ENCODE measurements at regions of chr6 and their contacts with region 1.

Region 1: DNA sequence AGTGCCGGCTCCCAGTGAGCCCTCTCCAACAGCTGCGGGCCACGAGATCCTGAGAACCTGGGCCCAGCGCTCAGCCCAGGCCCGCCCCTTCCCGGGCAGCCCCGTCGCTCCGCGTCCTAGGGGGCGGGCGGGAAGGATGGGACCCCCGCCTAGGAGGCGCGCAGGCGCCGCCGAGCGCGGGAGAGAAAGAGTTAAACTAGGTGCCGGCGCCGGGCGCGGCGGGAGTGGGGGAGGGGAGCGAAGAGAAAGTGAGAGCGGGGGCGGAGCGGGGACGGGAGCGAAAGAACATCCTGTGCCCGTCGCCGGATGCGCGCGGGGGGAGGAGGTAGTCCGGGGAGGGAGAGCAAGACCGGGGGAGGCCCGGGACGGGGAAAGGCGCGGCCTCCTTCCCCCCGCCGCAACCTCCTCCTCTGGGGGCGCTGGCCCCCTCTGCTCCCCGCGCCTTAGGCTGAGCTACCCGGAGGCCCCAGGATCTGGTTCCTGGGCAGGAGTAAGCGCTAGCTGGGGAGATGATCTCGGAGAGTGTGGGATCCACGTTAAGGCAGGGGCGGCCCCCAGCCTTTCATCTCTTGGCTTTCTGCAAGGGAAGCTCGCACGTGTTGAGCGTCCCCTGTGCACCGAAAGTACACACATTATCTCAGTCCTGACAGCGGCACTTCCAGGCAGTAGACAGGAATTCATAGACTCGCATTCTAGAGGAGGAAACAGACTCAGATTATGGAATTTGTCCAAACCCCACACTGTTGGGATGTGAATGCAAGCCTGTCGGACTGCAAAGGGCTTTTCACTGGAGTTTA is 4.9 kb upstream of the ARMC12 start:
- DNase-seq: no peak
- H3K4me3 ChIP-seq: peak overlapping the region; percentile 77
- H3K27me3 ChIP-seq: no peaks in the 10 kb centered on the region
- CTCF ChIP-seq: no peak

Region 2: GRCh38 chr6:35522660-35523658 is 209.0 kb before region 1 on chr6:
- CTCF ChIA-PET with region 1: interaction called, 113 read pairs
- POLR2A ChIA-PET with region 1: interaction called, 3 read pairs
- DNase-seq: no peak
- H3K4me3 ChIP-seq: 0 out of 2 replicates have a peak overlapping the region, but pooled peaks have one; percentile 4
- H3K27me3 ChIP-seq: peaks cover 6% of the 10 kb centered on the region
- CTCF ChIP-seq: peak; percentile 99

Region 3: DNA sequence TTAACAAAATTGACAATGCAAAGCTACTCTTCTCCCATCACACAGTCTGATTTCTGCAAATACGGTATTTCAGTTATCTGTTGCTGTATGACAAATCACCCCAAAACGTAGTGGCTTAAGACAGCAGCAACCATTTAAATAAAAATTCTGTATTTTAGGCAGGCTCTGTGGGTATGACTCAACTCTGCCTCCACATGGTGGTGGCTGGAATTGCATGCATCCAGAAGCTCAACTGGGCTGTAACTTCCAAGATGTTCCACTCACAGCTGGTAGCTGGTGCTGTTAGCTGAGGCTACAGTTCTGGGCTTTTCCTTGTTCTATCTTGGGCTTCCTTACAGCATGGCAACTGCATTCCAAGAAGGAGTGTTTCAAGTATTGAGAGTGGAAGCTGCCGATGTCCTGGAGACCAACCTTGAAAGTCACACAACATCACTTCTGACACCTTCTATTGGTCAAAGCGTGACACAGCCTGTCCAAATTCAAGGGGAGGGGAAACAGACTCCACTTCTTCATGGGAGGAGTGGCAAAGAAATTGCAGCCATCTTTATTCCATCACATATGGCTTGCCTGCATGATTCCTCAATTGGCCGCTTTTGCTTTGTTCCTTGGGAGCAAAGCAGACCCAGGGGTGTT is 179.5 kb before region 1 on chr6:
- CTCF ChIA-PET with region 1: interaction called, 12 read pairs
- POLR2A ChIA-PET with region 1: no interaction called
- DNase-seq: no peak
- H3K4me3 ChIP-seq: no peak overlapping the region
- H3K27me3 ChIP-seq: peaks cover 2% of the 10 kb centered on the region
- CTCF ChIP-seq: peak; percentile 89

Region 4: DNA sequence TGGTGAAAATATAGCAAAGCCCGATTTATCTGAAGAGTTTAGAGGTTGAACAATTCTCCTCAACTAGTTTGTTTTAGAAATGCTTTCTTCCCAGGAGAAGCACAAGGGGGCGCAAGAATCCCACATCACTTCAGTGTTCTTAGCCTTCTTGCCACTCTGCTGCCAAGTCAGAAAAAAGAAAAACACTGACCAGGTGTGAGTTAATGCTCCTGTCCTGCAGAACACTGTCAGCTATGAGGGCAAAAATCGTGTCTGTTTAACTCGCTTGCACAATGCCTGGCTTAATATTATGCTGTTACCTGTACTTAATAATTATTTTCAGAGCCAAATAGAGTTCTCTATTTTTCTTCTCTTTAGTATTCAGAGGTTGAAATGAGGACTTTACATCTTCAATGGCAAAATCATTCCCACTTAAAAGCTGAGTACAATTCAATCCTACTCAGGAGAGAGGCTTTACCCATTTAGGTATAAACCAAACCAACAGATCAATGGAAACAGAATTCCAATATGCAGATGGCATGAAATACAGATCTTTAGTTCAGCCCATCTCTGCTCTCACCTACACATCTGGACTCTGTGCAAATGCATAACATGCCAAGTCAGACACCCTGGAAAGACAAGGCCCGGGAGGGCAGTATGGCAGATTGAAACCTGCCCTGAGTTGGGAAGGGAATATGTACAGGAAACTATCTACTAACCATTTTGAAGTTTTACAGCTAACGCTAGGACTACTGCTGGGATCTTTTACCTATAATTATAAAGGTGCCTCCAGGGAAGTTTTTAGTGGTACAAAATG is 147.8 kb before region 1 on chr6:
- CTCF ChIA-PET with region 1: interaction called, 162 read pairs
- POLR2A ChIA-PET with region 1: no interaction called
- DNase-seq: no peak
- H3K4me3 ChIP-seq: no peak overlapping the region
- H3K27me3 ChIP-seq: no peaks in the 10 kb centered on the region
- CTCF ChIP-seq: peak; percentile 81

Region 5: DNA sequence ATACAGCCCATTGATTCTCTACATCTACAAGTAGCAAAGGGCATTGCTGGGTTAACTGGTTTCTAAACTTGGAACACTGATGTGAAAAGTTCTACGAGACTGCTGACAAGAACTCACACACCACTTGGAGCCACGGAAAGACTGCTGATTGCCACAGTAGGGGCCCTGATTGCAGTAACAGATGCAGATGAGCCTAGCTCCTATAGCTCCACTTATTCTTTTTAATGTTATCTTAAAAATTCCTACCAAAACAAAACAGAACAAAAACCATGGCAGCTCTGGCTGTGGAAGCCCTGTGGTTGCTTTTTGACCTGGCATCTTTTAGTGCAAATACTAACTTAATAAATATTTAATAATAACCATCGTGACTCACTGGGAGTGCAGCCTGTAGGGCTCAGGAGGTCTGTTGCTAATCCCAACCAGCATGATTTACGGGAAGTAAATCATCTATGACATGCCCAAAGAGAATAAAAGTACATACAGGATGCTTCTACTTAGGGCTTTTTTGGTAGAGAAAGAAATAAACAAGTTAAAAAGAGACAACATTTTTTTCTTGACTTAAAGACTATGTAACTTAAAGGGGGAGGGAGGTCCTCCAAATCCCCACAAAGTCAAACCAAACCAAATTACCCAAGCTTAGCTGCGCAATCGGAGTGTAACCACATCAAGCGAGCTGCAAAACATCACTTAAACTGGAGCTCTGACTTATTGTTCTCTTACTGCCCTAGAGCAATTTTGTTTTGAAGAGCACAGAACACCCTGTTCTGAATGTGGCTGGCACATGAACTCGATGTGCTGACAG is 130.4 kb before region 1 on chr6:
- CTCF ChIA-PET with region 1: interaction called, 36 read pairs
- POLR2A ChIA-PET with region 1: no interaction called
- DNase-seq: peak; percentile 50
- H3K4me3 ChIP-seq: no peak overlapping the region
- H3K27me3 ChIP-seq: no peaks in the 10 kb centered on the region
- CTCF ChIP-seq: no peak

Region 6: DNA sequence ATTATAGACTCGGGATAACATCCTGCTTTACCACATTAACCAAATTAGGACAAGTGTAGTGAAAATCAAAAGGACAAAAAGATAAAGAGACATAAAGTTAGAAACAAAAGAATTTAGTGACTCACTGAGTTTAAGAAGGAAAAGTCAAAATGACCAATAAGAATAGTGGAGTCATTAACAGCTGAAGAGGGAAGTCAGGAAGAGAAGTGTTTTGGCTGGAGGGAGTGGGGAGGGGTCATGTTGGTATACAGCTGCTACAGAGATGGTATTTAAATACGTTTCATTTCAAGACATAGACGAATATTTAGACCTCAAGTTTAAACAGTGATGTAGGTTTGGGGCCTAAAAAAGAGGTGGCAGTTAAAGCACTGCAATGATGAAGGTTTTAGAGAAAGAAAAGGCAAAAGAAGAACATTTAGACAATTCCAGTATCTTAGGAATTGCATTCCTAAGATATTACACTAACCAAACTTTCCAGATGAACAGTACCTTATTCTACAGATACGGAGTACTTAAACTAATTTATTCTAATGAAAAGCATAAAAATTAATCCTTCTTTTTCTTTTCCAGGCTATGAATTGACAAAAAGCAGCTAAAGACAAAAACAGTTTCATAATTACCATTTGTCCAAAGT is 53.8 kb before region 1 on chr6:
- CTCF ChIA-PET with region 1: interaction called, 19 read pairs
- POLR2A ChIA-PET with region 1: no interaction called
- DNase-seq: no peak
- H3K4me3 ChIP-seq: no peak overlapping the region
- H3K27me3 ChIP-seq: no peaks in the 10 kb centered on the region
- CTCF ChIP-seq: no peak

Region 7: GRCh38 chr6:35751594-35751993 is 19.7 kb after region 1 on chr6:
- CTCF ChIA-PET with region 1: interaction called, 15 read pairs
- POLR2A ChIA-PET with region 1: no interaction called
- DNase-seq: no peak
- H3K4me3 ChIP-seq: no peak overlapping the region
- H3K27me3 ChIP-seq: no peaks in the 10 kb centered on the region; the same call in 1 of the 2 replicates
- CTCF ChIP-seq: no peak

Region 8: DNA sequence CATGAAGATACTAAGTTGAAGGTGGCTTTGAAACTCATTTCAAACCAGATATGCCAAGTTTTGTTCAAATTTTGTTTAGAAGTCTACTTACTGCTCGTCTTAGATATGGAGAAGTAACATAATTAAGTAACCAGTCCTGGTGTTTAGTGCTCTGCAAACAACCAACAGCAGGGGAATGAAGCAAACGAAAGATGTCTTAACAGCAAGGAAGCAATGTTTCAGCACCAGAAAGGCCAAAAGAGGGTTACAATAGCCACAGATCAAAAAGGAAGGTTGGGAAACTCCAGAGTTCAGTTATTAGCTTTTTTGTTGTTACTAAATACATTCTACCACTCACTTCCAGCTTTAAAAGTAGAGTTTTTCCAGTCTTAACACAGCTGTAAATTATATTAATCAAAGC is 118.3 kb after region 1 on chr6:
- CTCF ChIA-PET with region 1: no interaction called
- POLR2A ChIA-PET with region 1: no interaction called
- DNase-seq: no peak
- H3K4me3 ChIP-seq: no peak overlapping the region
- H3K27me3 ChIP-seq: no peaks in the 10 kb centered on the region
- CTCF ChIP-seq: no peak